ENCODE measurements at regions of chr12 and their contacts with region 1.

Region 1: DNA sequence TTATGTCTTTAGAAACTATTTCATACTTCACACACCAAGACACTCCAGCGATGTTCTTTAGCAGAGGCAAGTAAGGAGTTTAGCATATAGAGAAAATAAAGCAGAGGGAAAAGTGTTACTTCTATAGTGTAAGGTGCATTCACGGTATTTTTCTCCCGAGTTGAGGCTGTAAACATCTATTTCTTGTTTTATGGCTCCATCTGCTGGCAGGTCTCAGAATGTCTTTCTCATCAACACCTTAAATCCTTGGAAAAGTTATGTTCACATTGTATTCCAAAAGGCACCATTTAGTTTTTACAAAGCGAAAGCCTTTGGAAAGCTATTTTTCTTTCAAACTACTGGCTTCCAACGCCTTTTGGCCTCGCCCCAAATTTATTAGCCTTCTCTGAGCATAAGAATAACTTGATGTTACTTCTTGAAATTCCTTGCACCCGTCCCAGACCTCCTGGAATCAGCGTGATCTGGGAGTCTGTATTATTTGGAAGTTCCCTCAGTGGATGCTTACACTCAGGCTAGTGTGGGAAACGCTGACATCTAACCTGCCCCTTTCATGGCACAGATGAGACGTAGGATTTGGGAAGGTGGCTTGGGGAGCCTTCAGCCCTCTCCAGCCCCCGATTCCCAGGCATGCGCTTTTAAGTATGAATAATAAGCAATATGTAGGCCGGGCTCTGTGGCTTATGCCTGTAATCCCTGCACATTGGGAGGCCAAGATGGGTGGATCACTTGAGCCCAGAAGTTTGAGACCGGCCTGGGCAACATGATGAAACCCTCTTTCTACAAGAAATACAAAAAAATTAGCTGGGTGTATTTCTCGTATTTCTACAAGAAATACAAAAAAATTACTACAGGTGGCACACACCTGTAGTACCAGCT is 1.9 kb upstream of the PIWIL1 start:
- DNase-seq: no peak
- H3K4me3 ChIP-seq: no peak overlapping the region
- H3K27ac ChIP-seq: no peak overlapping the region
- H3K4me1 ChIP-seq: peaks cover 5% of the 10 kb centered on the region
- H3K27me3 ChIP-seq: peaks cover 3% of the 10 kb centered on the region
- CTCF ChIP-seq: peak; percentile 49 to 60 (median 50)
- POLR2A ChIP-seq: no peak

Region 2: DNA sequence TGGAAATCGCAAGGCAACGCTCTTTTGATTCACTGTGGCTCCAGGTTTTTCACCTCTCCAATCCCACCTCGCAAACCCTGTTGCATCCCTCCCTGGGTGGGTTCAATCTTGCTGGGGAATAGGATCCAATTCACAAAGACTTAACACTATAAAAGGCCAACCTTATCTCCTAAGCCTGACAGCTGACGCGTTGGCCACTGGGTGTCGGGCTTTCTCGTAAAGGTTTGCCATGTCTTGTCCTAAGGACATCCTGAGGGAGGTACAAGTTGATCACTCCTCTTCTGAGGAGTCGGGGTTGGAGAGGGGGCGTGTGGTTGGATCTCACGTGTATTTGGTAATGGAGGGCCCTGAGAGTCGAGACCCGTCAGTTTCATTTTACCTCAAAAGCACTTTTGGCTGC is 286.1 kb before region 1 on chr12:
- intact Hi-C with region 1: loop called (anchors 2 kb)
- DNase-seq: no peak
- H3K4me3 ChIP-seq: no peak overlapping the region
- H3K27ac ChIP-seq: no peak overlapping the region
- H3K4me1 ChIP-seq: no peaks in the 10 kb centered on the region
- H3K27me3 ChIP-seq: no peaks in the 10 kb centered on the region
- CTCF ChIP-seq: no peak
- POLR2A ChIP-seq: no peak

Measured in vagina (tissue), 2 donors.